ENCODE measurements at regions of chr2 and their contacts with region 1.

Region 1: DNA sequence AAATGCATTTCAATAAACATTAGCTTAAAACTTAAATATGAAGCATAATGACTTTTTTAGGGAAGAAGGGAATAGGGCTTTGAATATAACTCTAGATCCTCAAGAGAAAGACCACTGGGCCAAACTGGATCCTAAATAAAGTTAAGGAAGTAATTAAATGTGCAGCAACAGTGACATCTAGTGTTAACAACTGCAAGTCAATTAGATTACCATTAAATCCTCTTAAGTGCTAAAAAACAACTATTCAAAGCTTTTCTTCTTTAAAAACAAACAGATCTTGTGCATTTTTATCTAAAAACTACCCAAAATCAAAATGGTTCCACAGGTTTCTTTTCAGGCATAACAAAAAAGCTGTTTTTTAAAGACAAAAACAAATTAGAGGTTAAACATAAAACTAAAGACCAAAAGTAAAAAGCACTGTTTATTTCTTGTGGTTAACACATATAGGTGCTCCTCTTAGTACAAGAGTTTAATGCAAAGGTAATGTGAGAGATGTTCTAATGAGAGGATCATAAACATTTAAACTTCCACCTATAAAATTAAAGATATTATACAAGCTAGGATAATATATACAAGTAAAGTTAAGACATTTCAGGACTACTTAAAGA is 111.4 kb downstream of the THADA start:
- DNase-seq: peak in 1 of 35 experiments; percentile 80
- ATAC-seq: no peak
- H3K4me3 ChIP-seq: no peak overlapping the region
- H3K4me3 Mint-ChIP-seq: no peak overlapping the region
- H3K27ac ChIP-seq: no peak overlapping the region
- H3K27ac Mint-ChIP-seq: peak overlapping the region in 1 of 2 donors; percentile 39
- H3K4me1 ChIP-seq: no peaks in the 10 kb centered on the region
- H3K4me1 Mint-ChIP-seq: peaks cover 0 to 18% (median 4%) of the 10 kb centered on the region in 3 donors
- H3K27me3 ChIP-seq: no peaks in the 10 kb centered on the region
- H3K27me3 Mint-ChIP-seq: no peaks in the 10 kb centered on the region

Region 2: GRCh38 chr2:42932271-42933151 is 551.9 kb before region 1 on chr2:
- CTCF ChIA-PET with region 1: interaction called, 3 to 12 read pairs
- POLR2A ChIA-PET with region 1: no interaction called
- DNase-seq: no peak
- ATAC-seq: no peak
- H3K4me3 ChIP-seq: no peak overlapping the region
- H3K4me3 Mint-ChIP-seq: no peak overlapping the region
- H3K27ac ChIP-seq: no peak overlapping the region
- H3K27ac Mint-ChIP-seq: no peak overlapping the region
- H3K4me1 ChIP-seq: no peaks in the 10 kb centered on the region
- H3K4me1 Mint-ChIP-seq: no peaks in the 10 kb centered on the region
- H3K27me3 ChIP-seq: peaks cover 0 to 15% of the 10 kb centered on the region in 2 experiments
- H3K27me3 Mint-ChIP-seq: no peaks in the 10 kb centered on the region

Region 3: GRCh38 chr2:42974721-42975717 is 509.4 kb before region 1 on chr2:
- CTCF ChIA-PET with region 1: interaction called, 11 to 15 read pairs
- POLR2A ChIA-PET with region 1: interaction called, 3 read pairs
- DNase-seq: peak in 32 of 35 experiments; percentile 12 to 69 (median 43)
- ATAC-seq: peak; percentile 35 to 70 (median 64)
- H3K4me3 ChIP-seq: no peak overlapping the region
- H3K4me3 Mint-ChIP-seq: no peak overlapping the region
- H3K27ac ChIP-seq: no peak overlapping the region
- H3K27ac Mint-ChIP-seq: no peak overlapping the region
- H3K4me1 ChIP-seq: peaks cover 0 to 11% of the 10 kb centered on the region in 2 experiments
- H3K4me1 Mint-ChIP-seq: peaks cover 11 to 16% (median 14%) of the 10 kb centered on the region in 3 donors
- H3K27me3 ChIP-seq: peaks cover 0 to 5% of the 10 kb centered on the region in 2 experiments
- H3K27me3 Mint-ChIP-seq: peaks cover 2 to 4% of the 10 kb centered on the region in 2 donors

Region 4: DNA sequence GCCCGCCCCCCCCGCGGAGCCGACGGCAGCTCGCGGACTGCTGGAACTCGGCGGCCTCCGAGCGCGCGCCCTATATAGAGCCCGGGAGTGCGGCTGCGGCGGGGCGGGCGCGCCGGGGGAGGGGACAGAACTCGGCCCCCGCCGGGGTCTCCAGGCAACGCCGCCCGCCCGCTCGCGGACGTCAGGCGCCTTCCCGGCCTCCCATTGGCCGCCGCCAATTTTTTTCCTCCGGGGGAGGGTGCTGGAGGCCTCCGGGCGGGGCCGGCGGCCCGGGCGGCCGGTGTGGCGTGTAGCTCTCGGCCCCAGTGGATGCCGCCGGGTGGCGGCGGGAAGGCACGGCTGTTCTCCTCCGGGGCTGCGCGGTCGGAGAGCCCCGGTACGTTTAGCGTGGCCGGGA is 257.9 kb before region 1 on chr2 and contains the start of gene ZFP36L2:
- CTCF ChIA-PET with region 1: interaction called in 1 of 2 experiments, 19 read pairs
- POLR2A ChIA-PET with region 1: interaction called in 1 of 2 experiments, 6 read pairs
- DNase-seq: peak; percentile 85 to 98 (median 91)
- ATAC-seq: peak; percentile 71 to 77 (median 76)
- H3K4me3 ChIP-seq: peak within 1 kb of the TSS; percentile 92 to 98
- H3K4me3 Mint-ChIP-seq: peak within 1 kb of the TSS; percentile 74 to 98 (median 95)
- H3K27ac ChIP-seq: peak within 1 kb of the TSS; percentile 89
- H3K27ac Mint-ChIP-seq: peak within 1 kb of the TSS; percentile 93 to 96
- H3K4me1 ChIP-seq: peaks cover 17 to 31% of the 10 kb centered on the region in 2 experiments
- H3K4me1 Mint-ChIP-seq: peaks cover 26 to 43% (median 29%) of the 10 kb centered on the region in 3 donors
- H3K27me3 ChIP-seq: no peaks in the 10 kb centered on the region
- H3K27me3 Mint-ChIP-seq: peaks cover 0 to 4% of the 10 kb centered on the region in 2 donors
- total RNA-seq, gene ZFP36L2: 329 to 974 (median 377) TPM

Region 5: GRCh38 chr2:43370705-43371104 is 113.7 kb before region 1 on chr2:
- CTCF ChIA-PET with region 1: no interaction called
- POLR2A ChIA-PET with region 1: no interaction called
- DNase-seq: no peak
- ATAC-seq: no peak
- H3K4me3 ChIP-seq: no peak overlapping the region
- H3K4me3 Mint-ChIP-seq: no peak overlapping the region
- H3K27ac ChIP-seq: no peak overlapping the region
- H3K27ac Mint-ChIP-seq: no peak overlapping the region
- H3K4me1 ChIP-seq: no peaks in the 10 kb centered on the region
- H3K4me1 Mint-ChIP-seq: peaks cover 9 to 13% (median 10%) of the 10 kb centered on the region in 3 donors
- H3K27me3 ChIP-seq: no peaks in the 10 kb centered on the region
- H3K27me3 Mint-ChIP-seq: no peaks in the 10 kb centered on the region

Region 6: GRCh38 chr2:43515248-43515647 is 30.8 kb after region 1 on chr2:
- CTCF ChIA-PET with region 1: no interaction called
- POLR2A ChIA-PET with region 1: no interaction called
- DNase-seq: no peak
- ATAC-seq: no peak
- H3K4me3 ChIP-seq: no peak overlapping the region
- H3K4me3 Mint-ChIP-seq: no peak overlapping the region
- H3K27ac ChIP-seq: no peak overlapping the region
- H3K27ac Mint-ChIP-seq: no peak overlapping the region
- H3K4me1 ChIP-seq: no peaks in the 10 kb centered on the region
- H3K4me1 Mint-ChIP-seq: peaks cover 33 to 43% (median 40%) of the 10 kb centered on the region in 3 donors
- H3K27me3 ChIP-seq: no peaks in the 10 kb centered on the region
- H3K27me3 Mint-ChIP-seq: no peaks in the 10 kb centered on the region

Measured in T-cell (primary cell).